WTC11 (cell line): ENCODE measurements at regions of chr6 and their contacts with region 1.

Region 1: DNA sequence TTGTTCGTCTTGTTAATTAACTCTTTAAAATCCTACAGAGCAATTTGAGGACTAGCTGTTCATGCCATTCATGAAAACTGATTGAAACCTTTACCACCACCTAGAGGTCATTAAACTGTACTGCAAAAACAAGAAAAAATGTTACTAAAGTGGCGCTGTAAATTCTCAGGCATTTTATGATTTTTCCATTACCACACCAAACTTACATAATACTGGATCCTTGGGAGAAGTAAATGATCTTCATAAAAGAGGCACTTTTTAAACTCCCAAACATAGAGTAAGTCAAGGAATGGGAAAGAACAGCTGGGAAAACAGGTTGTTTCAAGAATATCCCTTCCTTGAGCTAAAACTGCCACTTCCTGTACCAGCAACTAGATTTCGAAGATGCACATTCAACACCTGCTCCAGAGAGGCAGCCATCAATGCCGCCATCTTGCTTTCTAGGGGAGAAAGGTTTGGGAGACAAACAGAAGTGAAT is 54.3 kb downstream of the MYLIP start:
- DNase-seq: no peak
- ATAC-seq: no peak
- H3K4me3 Mint-ChIP-seq: no peak overlapping the region
- H3K27ac Mint-ChIP-seq: 0 out of 2 replicates have a peak overlapping the region, but pooled peaks have one; percentile 12
- H3K4me1 Mint-ChIP-seq: peaks cover 12% of the 10 kb centered on the region
- H3K27me3 Mint-ChIP-seq: no peaks in the 10 kb centered on the region
- CTCF ChIP-seq: peak; percentile 58

Region 2: DNA sequence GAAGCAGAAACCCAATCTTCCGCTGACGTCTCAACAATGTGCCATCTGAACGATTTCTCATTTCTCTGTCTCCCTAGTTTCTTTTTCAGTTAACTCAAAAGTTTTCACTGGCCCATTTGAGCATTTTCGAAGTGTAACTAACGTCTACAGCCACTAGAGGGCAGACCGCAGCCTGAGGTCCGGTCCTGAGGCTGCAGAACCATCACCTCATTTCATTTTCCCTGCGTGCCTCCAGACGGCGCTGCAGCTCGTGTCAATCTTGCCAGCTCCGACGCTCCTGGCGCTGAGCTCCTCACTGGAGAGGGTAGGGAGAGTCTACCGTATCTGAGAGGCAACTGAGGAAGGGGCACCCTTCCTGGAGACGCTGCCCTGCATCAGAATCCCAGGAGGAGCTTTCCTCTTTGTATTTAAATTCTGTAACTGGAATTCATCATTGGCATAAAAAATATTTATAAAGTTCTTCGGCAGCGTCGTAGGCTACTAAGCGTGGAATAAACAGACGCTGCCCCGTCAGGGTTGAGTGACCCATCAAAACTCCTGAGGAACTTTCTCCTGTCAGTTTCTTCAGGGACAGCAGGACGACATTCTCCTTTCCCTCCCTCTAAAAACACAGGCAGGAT is 491.9 kb before region 1 on chr6:
- CTCF ChIA-PET with region 1: interaction called, 57 read pairs
- POLR2A ChIA-PET with region 1: interaction called, 5 read pairs
- DNase-seq: peak; percentile 83
- ATAC-seq: peak; percentile 100
- H3K4me3 Mint-ChIP-seq: no peak overlapping the region
- H3K27ac Mint-ChIP-seq: no peak overlapping the region
- H3K4me1 Mint-ChIP-seq: peaks cover 16% of the 10 kb centered on the region
- H3K27me3 Mint-ChIP-seq: peaks cover 9% of the 10 kb centered on the region
- CTCF ChIP-seq: peak; percentile 97

Region 3: GRCh38 chr6:15872241-15873103 is 310.8 kb before region 1 on chr6:
- CTCF ChIA-PET with region 1: interaction called, 13 read pairs
- POLR2A ChIA-PET with region 1: no interaction called
- DNase-seq: no peak
- ATAC-seq: no peak
- H3K4me3 Mint-ChIP-seq: no peak overlapping the region
- H3K27ac Mint-ChIP-seq: no peak overlapping the region
- H3K4me1 Mint-ChIP-seq: peaks cover 22% of the 10 kb centered on the region
- H3K27me3 Mint-ChIP-seq: no peaks in the 10 kb centered on the region
- CTCF ChIP-seq: no peak

Region 4: GRCh38 chr6:16128759-16129622 is 54.2 kb before region 1 on chr6 and contains the start of gene MYLIP:
- CTCF ChIA-PET with region 1: interaction called, 10 read pairs
- POLR2A ChIA-PET with region 1: interaction called, 3 read pairs
- DNase-seq: peak; percentile 97
- ATAC-seq: peak; percentile 89
- H3K4me3 Mint-ChIP-seq: peak within 1 kb of the TSS; percentile 96
- H3K27ac Mint-ChIP-seq: peak within 1 kb of the TSS; percentile 90
- H3K4me1 Mint-ChIP-seq: peaks cover 29% of the 10 kb centered on the region
- H3K27me3 Mint-ChIP-seq: peaks cover 8% of the 10 kb centered on the region
- CTCF ChIP-seq: peak; percentile 41
- total RNA-seq, gene MYLIP: 43.4 to 50.0 TPM (median 44.5 TPM) in 3 replicates

Region 5: DNA sequence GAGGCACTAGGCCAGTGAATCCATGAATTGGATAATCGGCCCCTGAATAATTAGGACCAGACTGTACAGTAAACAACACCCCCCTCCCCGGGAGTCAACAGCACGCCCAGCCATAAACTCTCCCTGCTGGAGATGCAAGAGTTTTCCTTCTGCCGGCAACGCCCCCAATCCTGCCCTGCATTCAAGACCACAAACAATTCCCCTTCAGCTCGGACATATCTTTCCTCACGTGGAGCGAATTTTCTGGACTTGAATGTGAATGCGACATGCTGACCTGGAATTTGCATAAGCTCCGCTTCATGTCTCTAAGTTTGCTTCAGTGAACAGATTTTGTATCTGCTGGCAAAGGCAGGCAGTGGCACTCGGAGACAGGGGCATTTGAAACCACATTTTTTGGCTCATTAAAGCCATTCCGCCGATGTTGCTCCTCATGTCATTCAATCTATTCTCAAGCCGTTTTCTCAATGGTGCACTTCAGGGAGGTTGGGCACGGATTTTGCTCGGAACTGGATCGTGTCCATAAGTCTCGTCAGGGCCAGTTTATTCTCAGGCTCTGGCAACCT is 17.2 kb after region 1 on chr6:
- CTCF ChIA-PET with region 1: interaction called, 25 read pairs
- POLR2A ChIA-PET with region 1: no interaction called
- DNase-seq: no peak
- ATAC-seq: no peak
- H3K4me3 Mint-ChIP-seq: no peak overlapping the region
- H3K27ac Mint-ChIP-seq: no peak overlapping the region
- H3K4me1 Mint-ChIP-seq: peaks cover 14% of the 10 kb centered on the region
- H3K27me3 Mint-ChIP-seq: no peaks in the 10 kb centered on the region
- CTCF ChIP-seq: no peak

Region 6: DNA sequence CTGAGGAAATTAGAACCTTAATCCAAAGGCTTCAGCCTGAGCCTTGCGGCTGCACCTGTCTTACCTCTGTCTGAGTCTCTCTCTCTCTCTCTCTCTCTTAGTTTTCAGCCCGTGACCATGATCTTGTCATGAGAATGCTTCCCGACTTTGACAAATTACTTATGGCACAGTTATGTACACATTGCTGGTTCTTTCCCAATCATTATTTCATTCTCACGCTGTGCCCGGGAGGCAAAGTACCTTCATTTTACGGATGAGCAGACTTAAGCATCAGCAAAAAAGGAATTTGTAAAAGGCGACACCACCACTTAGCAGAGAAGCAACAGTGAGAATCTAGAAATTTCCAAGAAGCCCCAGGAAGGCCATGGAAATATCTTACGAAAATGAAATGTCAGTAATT is 109.7 kb after region 1 on chr6:
- CTCF ChIA-PET with region 1: no interaction called
- POLR2A ChIA-PET with region 1: no interaction called
- DNase-seq: no peak
- ATAC-seq: no peak
- H3K4me3 Mint-ChIP-seq: no peak overlapping the region
- H3K27ac Mint-ChIP-seq: no peak overlapping the region
- H3K4me1 Mint-ChIP-seq: peaks cover 8% of the 10 kb centered on the region
- H3K27me3 Mint-ChIP-seq: no peaks in the 10 kb centered on the region
- CTCF ChIP-seq: no peak